BJ (cell line): ENCODE measurements at regions of chr2 and their contacts with region 1.

Region 1: DNA sequence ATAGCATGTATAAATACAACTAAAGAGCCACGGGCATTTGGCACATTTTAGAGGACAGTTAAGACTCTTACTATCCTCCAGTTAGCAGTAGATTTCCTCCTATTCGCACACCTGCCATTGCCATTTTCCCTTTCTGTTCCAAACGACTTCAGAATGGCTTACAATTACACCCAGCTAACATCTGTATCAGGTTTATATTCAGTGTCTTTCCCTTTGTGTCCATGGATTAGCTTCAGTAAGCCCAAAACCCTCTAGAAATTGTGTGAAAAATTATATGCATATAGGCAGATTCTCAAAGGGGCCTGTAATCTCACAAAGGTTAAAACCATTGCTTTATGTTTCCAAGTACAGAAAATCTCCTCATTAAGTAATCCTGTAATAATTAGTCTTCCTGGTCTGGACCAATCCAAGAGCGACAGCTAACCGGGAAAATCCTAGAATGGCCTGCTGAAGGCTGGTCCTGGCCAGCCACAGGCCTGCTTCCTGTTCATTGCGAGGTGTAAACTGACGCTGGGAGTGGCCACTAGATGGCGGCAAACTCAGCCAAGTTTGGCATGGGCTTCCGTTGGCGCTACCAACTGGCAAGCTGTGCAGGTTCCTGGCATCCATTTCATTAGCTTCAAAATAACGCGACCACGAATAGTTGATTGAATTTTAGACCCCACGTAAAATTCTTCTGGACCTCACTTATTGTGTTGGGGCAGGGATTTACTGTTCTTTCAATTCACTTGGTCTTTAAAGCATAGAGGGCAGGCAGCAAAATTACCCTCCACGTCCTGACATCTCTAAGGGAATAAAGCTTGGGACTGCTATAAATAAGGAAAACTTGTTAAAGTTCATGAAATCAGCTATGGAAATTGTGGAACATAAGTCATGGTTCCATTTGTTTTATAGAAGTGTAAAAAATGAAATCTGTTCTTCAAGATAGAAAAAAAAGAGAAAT is 17.1 kb downstream of the ARHGAP25 start:
- DNase-seq: peak; percentile 29
- H3K4me3 ChIP-seq: no peak overlapping the region
- H3K27me3 ChIP-seq: peaks cover 2% of the 10 kb centered on the region; the same call in 1 of the 2 replicates
- CTCF ChIP-seq: peak; percentile 95

Region 2: GRCh38 chr2:68689553-68690537 is 61.8 kb before region 1 on chr2:
- CTCF ChIA-PET with region 1: no interaction called
- POLR2A ChIA-PET with region 1: no interaction called
- DNase-seq: no peak
- H3K4me3 ChIP-seq: no peak overlapping the region
- H3K27me3 ChIP-seq: 0 out of 2 replicates have a peak, but pooled peaks cover 2% of the 10 kb centered on the region
- CTCF ChIP-seq: no peak

Region 3: DNA sequence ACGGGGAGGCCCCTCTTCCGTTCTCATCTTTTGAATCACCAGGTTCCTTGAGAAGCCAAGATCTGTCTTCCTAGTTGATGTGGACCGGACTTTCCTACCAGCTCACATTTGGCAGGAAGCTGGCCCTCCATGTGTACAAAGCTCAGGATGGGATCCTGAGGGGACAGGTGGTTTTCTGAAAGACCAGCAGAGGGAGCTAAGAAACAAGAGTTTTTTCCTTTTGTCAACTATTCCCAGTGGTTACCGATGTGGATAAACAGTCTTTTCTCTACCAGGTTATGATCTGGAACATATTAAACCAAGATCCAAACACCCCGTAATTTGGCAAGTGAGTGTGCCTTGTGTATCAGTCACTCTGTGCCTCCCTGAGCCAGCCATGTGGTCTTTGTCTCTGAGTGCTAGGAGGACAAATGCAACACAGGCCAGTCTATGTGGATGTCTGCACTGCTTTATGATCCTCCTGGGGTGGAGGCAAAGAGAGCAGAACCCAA is 42.2 kb before region 1 on chr2:
- CTCF ChIA-PET with region 1: interaction called, 11 read pairs
- POLR2A ChIA-PET with region 1: no interaction called
- DNase-seq: no peak
- H3K4me3 ChIP-seq: no peak overlapping the region
- H3K27me3 ChIP-seq: peaks cover 3% of the 10 kb centered on the region
- CTCF ChIP-seq: peak; percentile 75

Region 4: DNA sequence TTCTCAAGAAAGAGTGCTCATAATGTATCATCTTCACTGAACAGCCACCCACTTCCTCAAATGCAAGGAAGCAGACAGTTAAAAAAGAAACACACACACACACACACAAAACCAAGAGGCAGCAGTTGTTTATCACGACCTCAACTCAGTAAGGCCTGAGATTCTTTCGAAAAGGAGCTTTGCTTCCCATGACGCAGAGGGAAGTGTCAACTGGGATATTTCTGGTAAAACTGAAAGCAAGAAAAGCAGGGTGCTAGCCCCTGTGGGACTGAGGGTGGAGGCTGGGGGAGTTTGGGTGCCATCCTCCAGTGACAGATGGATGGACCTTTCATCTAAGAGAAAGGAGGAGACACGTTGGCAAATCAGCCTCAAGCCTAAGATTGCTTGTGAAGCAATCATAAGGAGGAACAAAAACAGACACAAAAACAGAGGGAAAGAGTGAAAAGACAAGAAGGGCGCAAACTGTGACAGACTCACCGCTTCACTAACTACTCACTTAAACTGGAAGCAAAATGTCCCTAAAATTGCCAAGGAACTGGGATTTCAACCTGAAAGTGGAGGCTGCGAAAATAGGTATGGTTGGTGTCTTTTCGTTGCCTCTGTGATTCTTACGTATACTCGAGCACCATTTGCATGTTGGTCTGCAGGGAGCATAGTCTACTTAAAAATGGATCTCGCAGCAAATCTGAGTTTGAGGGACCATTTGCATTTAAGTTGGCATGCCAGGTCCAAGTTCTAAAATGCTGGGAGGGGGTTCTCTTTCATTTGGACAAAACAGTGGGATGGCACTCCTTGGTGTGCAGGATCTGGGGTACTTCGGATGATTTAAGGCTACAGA is 16.8 kb before region 1 on chr2 and contains the start of gene ARHGAP25:
- CTCF ChIA-PET with region 1: interaction called, 29 read pairs
- POLR2A ChIA-PET with region 1: interaction called, 3 read pairs
- DNase-seq: no peak
- H3K4me3 ChIP-seq: no peak within 1 kb of the TSS
- H3K27me3 ChIP-seq: peaks cover 5% of the 10 kb centered on the region
- CTCF ChIP-seq: no peak
- polyA plus RNA-seq, gene ARHGAP25: 0.06 TPM in 1 of 2 replicates, not detected in the other

Region 5: GRCh38 chr2:68839260-68839833 is 87.7 kb after region 1 on chr2:
- CTCF ChIA-PET with region 1: interaction called, 10 read pairs
- POLR2A ChIA-PET with region 1: no interaction called
- DNase-seq: no peak
- H3K4me3 ChIP-seq: no peak overlapping the region
- H3K27me3 ChIP-seq: no peaks in the 10 kb centered on the region; the same call in 1 of the 2 replicates
- CTCF ChIP-seq: peak; percentile 66

Region 6: DNA sequence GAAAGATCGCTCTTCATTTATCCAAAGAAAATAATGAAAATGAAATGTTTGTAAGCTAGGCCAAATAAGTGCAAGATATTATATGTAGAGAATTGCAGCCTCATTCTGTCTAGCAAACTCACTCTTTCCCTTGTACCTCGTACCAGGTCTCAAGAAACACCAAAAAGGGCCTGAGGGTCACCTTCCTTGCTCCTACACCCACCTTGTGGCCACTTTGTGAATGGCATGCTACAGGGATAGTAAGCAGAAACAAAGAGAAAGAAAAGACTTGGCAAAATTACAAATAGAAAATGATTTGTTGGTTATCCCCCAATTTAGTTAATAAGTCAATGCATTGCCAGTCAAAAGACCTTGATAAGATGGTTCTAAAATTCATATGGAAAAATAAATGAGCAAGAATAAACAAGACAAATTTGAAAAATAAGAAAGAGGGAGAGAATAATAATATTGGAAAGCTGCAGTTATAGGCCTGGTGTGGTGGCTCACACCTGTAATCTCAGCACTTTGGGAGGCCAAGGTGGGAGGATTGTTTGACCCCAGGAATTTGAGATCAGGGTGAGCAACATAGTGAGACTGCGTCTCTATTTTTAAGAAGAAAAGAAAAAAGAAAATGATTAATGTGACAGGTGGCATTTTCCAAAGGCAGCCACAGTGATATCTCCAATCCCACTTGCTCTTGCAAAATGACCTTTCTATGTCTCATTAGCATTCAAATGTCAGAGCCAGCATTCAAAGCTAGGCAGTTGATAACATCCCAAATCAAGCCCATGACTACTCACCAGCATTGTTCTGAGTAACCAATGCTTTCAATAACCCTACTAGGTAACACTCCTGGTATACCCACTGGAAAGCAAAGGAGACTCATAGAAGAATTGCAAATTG is 158.4 kb after region 1 on chr2:
- CTCF ChIA-PET with region 1: interaction called, 97 read pairs
- POLR2A ChIA-PET with region 1: no interaction called
- DNase-seq: no peak
- H3K4me3 ChIP-seq: no peak overlapping the region
- H3K27me3 ChIP-seq: no peaks in the 10 kb centered on the region; the same call in 1 of the 2 replicates
- CTCF ChIP-seq: peak; percentile 93

Region 7: GRCh38 chr2:68918497-68918896 is 166.8 kb after region 1 on chr2:
- CTCF ChIA-PET with region 1: interaction called, 68 read pairs
- POLR2A ChIA-PET with region 1: no interaction called
- DNase-seq: no peak
- H3K4me3 ChIP-seq: no peak overlapping the region
- H3K27me3 ChIP-seq: no peaks in the 10 kb centered on the region
- CTCF ChIP-seq: no peak

Region 8: GRCh38 chr2:68925295-68925896 is 173.7 kb after region 1 on chr2:
- CTCF ChIA-PET with region 1: interaction called, 68 read pairs
- POLR2A ChIA-PET with region 1: no interaction called
- DNase-seq: no peak
- H3K4me3 ChIP-seq: no peak overlapping the region
- H3K27me3 ChIP-seq: peaks cover 2% of the 10 kb centered on the region
- CTCF ChIP-seq: peak; percentile 88

Region 9: DNA sequence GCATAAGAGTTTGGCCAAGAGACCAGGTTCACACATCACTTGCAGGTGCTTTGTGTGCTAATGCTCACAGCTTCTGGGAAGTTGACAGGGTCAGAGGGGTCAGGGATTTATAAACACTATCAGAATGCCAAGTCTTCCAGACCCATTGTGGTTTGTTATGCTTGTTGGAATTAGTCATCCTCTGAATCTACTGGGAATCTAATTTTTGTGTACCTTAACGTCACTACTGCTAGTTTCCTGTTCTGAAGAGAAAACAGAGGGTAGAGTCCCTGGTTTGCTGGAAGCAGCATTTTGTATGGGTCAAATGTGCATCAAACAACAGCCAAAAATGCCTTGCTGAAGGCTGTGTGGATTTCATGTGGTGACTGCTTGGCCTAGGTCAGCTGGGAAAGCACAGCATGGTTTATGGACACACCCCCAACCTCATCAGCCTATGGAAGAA is 294.6 kb after region 1 on chr2:
- CTCF ChIA-PET with region 1: no interaction called
- POLR2A ChIA-PET with region 1: no interaction called
- DNase-seq: no peak
- H3K4me3 ChIP-seq: no peak overlapping the region
- H3K27me3 ChIP-seq: no peaks in the 10 kb centered on the region
- CTCF ChIP-seq: no peak